Heart right ventricle (tissue), 16 donors: ENCODE measurements at regions of chr18 and their contacts with region 1.

Region 1: DNA sequence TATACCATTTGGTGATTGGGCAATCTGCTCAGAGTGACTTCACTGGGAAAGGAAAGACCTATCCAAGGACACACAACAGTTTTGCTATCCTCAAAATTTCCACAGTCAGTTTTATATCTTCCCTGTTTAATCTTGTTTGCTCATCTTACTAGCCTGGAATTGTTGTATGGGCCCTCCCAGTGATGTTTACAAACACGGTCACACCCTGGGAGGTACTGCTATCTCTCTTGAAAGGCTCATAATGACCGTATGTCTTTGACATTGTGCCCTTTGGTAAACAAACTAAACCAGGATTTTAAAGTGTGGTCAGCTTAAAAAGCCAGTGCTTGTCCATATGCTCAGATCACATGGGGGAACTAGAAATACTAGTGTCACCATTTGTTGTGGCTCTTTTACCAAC is 277.0 kb downstream of the CDH2 start:
- DNase-seq: no peak
- ATAC-seq: no peak
- H3K4me3 ChIP-seq: no peak overlapping the region
- H3K27ac ChIP-seq: no peak overlapping the region
- H3K4me1 ChIP-seq: no peaks in the 10 kb centered on the region
- H3K27me3 ChIP-seq: no peaks in the 10 kb centered on the region
- CTCF ChIP-seq: no peak

Region 2: DNA sequence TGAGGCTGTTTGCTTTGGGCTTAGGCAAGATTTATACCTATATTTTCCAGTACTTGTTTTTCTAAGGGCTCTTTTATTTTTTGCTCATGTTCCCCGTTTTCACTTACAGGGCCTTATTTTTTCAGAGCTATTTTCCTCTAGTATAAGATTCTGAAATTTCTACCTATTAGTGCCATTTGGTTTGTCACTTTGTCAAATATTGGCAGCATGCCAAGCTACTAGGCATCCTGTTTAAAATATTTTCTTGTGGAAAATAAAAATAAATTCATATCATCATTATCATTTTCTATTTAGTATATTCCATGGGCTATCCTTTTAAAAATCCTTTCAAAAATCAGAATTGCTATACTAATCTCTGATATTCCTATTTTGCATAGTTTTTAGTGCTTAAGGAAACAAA is 650.0 kb before region 1 on chr18:
- intact Hi-C with region 1: loop called in 1 of 10 experiments (anchors 10 kb)
- DNase-seq: no peak
- ATAC-seq: no peak
- H3K4me3 ChIP-seq: no peak overlapping the region
- H3K27ac ChIP-seq: no peak overlapping the region
- H3K4me1 ChIP-seq: no peaks in the 10 kb centered on the region
- H3K27me3 ChIP-seq: no peaks in the 10 kb centered on the region
- CTCF ChIP-seq: no peak

Region 3: DNA sequence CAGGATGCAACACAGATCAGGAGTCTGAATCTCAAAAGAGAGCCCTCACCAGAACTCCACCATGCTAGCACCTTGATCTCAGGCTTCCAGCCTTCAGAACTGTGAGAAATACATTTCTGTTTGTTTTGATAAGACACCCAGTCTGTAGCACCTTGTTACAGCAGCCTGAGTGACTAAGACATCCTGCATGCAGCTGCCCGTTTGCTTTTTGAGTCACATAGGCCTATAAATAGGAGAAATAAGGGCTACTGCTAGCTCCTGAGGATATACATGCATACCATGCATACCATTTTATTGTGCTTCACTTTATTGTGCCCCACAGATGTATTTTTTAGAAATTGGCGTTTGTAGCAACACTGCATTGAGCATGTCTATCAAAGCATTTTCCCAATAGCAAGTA is 60.8 kb before region 1 on chr18:
- intact Hi-C with region 1: loop called in 1 of 10 experiments (anchors 10 kb)
- DNase-seq: no peak
- ATAC-seq: no peak
- H3K4me3 ChIP-seq: no peak overlapping the region
- H3K27ac ChIP-seq: no peak overlapping the region
- H3K4me1 ChIP-seq: no peaks in the 10 kb centered on the region
- H3K27me3 ChIP-seq: no peaks in the 10 kb centered on the region
- CTCF ChIP-seq: no peak